Colonic mucosa (tissue), 4 donors: ENCODE measurements at regions of chr17 and their contacts with region 1.

Region 1: DNA sequence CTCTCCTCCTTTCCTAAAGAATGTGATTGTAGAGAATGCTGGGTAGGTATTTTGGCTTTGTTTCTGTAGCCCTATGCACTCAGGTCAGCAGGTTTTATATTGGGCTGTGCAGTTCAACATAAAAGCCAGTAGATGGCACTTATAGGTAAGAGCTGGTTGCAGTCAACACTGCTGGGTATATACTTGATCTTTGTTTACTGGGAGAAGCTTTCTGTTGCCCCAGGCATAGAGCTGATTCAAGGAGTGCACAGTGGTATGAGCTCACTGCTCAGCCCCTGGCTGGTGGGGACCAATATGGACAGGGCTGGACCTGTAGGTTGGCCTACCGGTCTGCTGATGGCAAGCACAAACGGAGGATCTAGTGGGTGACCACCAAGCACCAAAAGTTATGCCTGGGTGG is 378.9 kb downstream of the PMP22 start:
- DNase-seq: no peak
- H3K4me3 ChIP-seq: no peak overlapping the region
- H3K27ac ChIP-seq: no peak overlapping the region
- H3K4me1 ChIP-seq: no peaks in the 10 kb centered on the region
- H3K27me3 ChIP-seq: no peaks in the 10 kb centered on the region
- CTCF ChIP-seq: no peak

Region 2: GRCh38 chr17:14826358-14826757 is 59.9 kb before region 1 on chr17:
- intact Hi-C with region 1: loop called (anchors 10 kb)
- DNase-seq: no peak
- H3K4me3 ChIP-seq: no peak overlapping the region
- H3K27ac ChIP-seq: no peak overlapping the region
- H3K4me1 ChIP-seq: no peaks in the 10 kb centered on the region
- H3K27me3 ChIP-seq: no peaks in the 10 kb centered on the region
- CTCF ChIP-seq: no peak